T-cell (primary cell): ENCODE measurements at regions of chr3 and their contacts with region 1.

Region 1: DNA sequence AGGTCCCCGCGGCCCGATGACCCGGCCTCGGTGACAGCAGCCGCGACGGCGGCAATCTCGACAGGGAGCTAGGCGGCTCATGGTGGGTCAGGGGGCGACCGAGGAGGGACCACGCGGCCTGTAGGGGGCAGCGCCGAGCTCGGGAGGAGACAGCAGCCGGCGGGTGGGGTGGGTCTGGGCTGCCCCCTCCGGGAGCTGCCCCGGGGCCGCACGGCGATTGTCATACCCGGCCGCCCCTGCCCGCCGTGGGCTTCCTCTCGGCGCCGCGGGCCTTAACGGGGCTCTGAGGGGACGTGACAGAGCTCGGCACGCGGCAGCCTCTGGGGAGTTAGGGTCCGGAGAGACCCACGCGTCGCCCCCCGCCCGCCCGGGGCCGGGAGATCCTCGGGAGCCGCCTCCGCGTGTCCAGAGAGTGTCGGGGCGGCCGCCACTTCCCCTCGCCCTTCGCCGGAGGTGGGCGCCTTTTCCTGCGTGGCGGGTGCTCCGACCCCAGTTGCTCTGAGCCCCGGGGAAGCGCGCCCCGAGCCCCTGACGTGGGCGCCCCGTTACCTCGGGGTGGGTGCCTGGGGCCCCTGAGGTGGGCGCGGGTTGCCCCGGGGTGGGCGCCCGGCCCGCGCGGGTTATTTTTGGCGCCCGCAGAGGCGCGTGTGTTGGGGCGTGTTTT is 539 bp upstream of the PLCL2 start:
- DNase-seq: peak in 34 of 35 experiments; percentile 41 to 80 (median 60)
- ATAC-seq: peak; percentile 47 to 56 (median 52)
- H3K4me3 ChIP-seq: peak overlapping the region; percentile 58 to 98
- H3K4me3 Mint-ChIP-seq: peak overlapping the region; percentile 91 to 98 (median 94)
- H3K27ac ChIP-seq: peak overlapping the region; percentile 70
- H3K27ac Mint-ChIP-seq: peak overlapping the region; percentile 95 to 96
- H3K4me1 ChIP-seq: peaks cover 13 to 26% of the 10 kb centered on the region in 2 experiments
- H3K4me1 Mint-ChIP-seq: peaks cover 26 to 40% (median 40%) of the 10 kb centered on the region in 3 donors
- H3K27me3 ChIP-seq: no peaks in the 10 kb centered on the region
- H3K27me3 Mint-ChIP-seq: no peaks in the 10 kb centered on the region

Region 2: GRCh38 chr3:16842272-16843270 is 41.6 kb before region 1 on chr3:
- CTCF ChIA-PET with region 1: interaction called in 1 of 2 experiments, 20 read pairs
- POLR2A ChIA-PET with region 1: interaction called, 4 to 7 read pairs
- DNase-seq: peak; percentile 53 to 88 (median 71)
- ATAC-seq: peak; percentile 91 to 93 (median 92)
- H3K4me3 ChIP-seq: peak overlapping the region; percentile 35
- H3K4me3 Mint-ChIP-seq: peak overlapping the region; percentile 68 to 83 (median 79)
- H3K27ac ChIP-seq: peak overlapping the region; percentile 95
- H3K27ac Mint-ChIP-seq: peak overlapping the region; percentile 95 to 100
- H3K4me1 ChIP-seq: peaks cover 43 to 55% of the 10 kb centered on the region in 2 experiments
- H3K4me1 Mint-ChIP-seq: peaks cover 83 to 88% (median 85%) of the 10 kb centered on the region in 3 donors
- H3K27me3 ChIP-seq: no peaks in the 10 kb centered on the region
- H3K27me3 Mint-ChIP-seq: no peaks in the 10 kb centered on the region

Region 3: GRCh38 chr3:16860234-16860633 is 24.0 kb before region 1 on chr3:
- CTCF ChIA-PET with region 1: no interaction called
- POLR2A ChIA-PET with region 1: no interaction called
- DNase-seq: no peak
- ATAC-seq: no peak
- H3K4me3 ChIP-seq: no peak overlapping the region
- H3K4me3 Mint-ChIP-seq: no peak overlapping the region
- H3K27ac ChIP-seq: no peak overlapping the region
- H3K27ac Mint-ChIP-seq: no peak overlapping the region
- H3K4me1 ChIP-seq: no peaks in the 10 kb centered on the region
- H3K4me1 Mint-ChIP-seq: peaks cover 0 to 6% (median 3%) of the 10 kb centered on the region in 3 donors
- H3K27me3 ChIP-seq: no peaks in the 10 kb centered on the region
- H3K27me3 Mint-ChIP-seq: no peaks in the 10 kb centered on the region

Region 4: DNA sequence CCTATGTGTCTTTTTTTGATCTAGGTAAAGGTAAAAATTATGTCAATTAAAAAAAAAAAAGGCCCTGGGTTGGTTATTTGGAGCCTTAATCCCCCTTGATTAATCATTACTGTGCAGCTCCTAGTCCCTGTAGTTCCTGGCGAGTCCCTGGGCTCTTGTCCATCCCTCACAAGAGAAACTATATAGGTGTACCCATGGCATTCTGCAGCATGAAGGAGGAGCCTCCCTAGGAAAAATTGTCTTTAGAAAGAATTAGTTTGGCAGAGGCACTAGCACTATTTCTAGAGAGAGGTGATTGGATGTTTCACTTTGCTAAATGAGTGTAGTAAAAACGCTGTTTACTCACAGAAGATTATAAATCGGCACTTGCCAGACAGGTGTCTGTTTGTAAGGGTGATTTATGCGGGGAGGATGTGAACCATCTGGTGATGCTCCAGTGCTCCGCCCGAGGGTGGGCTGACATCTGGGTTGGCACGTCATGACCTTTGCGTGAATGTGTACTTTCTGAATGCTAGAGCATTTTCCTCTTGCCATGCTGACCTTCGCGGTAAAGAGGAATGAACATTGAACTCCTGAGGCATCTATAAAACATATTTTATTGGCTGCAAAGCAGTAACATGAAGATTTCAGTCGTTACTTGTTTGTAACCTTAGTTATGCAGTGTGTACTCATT is 13.2 kb after region 1 on chr3:
- CTCF ChIA-PET with region 1: interaction called, 3 to 5 read pairs
- POLR2A ChIA-PET with region 1: interaction called, 6 to 11 read pairs
- DNase-seq: peak in 22 of 35 experiments; percentile 22 to 58 (median 44)
- ATAC-seq: peak; percentile 44 to 81 (median 58)
- H3K4me3 ChIP-seq: no peak overlapping the region
- H3K4me3 Mint-ChIP-seq: peak overlapping the region; percentile 5 to 68 (median 39)
- H3K27ac ChIP-seq: peak overlapping the region; percentile 30
- H3K27ac Mint-ChIP-seq: peak overlapping the region; percentile 92 to 93
- H3K4me1 ChIP-seq: peaks cover 55 to 59% of the 10 kb centered on the region in 2 experiments
- H3K4me1 Mint-ChIP-seq: peaks cover 87 to 91% (median 91%) of the 10 kb centered on the region in 3 donors
- H3K27me3 ChIP-seq: no peaks in the 10 kb centered on the region
- H3K27me3 Mint-ChIP-seq: no peaks in the 10 kb centered on the region